Heart left ventricle (tissue), 16 donors: ENCODE measurements at regions of chr4 and their contacts with region 1.

Region 1: DNA sequence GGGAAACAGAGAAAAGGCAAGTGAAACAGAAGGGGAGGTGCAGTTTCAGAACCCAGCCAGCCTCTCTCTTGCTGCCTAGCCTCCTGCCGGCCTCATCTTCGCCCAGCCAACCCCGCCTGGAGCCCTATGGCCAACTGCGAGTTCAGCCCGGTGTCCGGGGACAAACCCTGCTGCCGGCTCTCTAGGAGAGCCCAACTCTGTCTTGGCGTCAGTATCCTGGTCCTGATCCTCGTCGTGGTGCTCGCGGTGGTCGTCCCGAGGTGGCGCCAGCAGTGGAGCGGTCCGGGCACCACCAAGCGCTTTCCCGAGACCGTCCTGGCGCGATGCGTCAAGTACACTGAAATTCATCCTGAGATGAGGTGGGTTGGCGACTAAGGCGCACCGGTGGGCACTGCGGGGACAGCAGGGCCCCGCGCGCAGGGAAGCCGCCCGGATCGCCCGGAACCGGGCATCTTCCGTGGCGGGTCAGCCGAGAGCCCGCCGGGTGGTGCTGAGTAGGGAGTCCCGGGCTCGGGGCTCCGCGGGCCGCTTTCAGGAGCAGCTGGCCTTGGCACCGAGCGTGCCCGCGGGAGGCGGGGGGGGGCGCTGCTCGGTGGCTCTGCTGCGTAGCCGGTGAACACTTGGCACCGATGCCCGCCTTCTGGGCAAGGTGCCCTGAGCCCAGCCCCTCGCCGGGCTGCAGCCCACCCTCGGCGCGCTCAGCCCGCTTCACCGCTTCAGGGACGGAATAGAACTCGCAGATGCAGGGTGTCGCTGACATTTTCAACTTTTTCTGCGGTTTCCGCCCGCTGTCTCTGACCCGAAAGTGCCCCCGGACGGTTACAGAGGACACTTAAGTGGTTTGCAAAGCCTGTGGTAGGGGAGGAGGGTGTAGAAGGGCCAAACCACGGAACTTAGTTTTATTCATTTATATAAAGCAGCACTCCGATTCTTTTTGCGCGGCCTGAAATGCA is at the start of gene CD38:
- DNase-seq: peak; percentile 25 to 79 (median 46)
- ATAC-seq: peak in 3 of 4 donors; percentile 66 to 80 (median 78)
- H3K4me3 ChIP-seq: peak within 1 kb of the TSS; percentile 54 to 90 (median 62)
- H3K27ac ChIP-seq: peak within 1 kb of the TSS; percentile 17 to 79 (median 62)
- H3K4me1 ChIP-seq: peaks cover 0 to 40% (median 7%) of the 10 kb centered on the region in 12 donors
- H3K27me3 ChIP-seq: no peaks in the 10 kb centered on the region
- CTCF ChIP-seq: no peak
- POLR2A ChIP-seq: no peak
- total RNA-seq, gene CD38: 1.0 to 12.4 (median 3.0) TPM

Region 2: GRCh38 chr4:15714646-15715435 is 63.7 kb before region 1 on chr4:
- intact Hi-C with region 1: loop called in 1 of 10 experiments (anchors 5 kb)
- DNase-seq: peak in 4 of 5 donors; percentile 32 to 52 (median 34)
- ATAC-seq: peak in 3 of 4 donors; percentile 36 to 71 (median 42)
- H3K4me3 ChIP-seq: no peak overlapping the region
- H3K27ac ChIP-seq: peak overlapping the region in 1 of 12 donors; percentile 12
- H3K4me1 ChIP-seq: peaks cover 0 to 8% (median 0%) of the 10 kb centered on the region in 12 donors
- H3K27me3 ChIP-seq: no peaks in the 10 kb centered on the region
- CTCF ChIP-seq: no peak
- POLR2A ChIP-seq: no peak

Region 3: DNA sequence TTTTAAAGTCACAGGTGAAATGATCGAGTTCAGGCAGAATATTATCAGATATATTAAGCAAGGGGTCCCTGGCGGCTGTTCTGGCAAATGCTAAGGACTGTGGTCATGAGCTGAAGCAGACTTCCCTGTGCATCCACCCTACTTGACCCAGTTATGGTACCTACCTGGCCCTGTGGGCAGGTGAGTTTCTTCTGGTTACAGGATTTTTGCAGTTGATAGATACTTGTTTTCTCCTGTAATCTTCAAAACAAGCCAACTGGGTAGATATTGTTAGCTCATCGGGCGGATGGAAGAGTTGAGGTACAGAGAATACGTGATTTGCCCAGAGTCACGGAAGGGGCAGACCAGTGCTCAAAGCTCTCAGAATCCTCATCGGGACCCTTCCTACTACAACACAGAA is 323.8 kb after region 1 on chr4:
- intact Hi-C with region 1: no loop called
- DNase-seq: no peak
- ATAC-seq: no peak
- H3K4me3 ChIP-seq: no peak overlapping the region
- H3K27ac ChIP-seq: no peak overlapping the region
- H3K4me1 ChIP-seq: peaks cover 0 to 15% (median 0%) of the 10 kb centered on the region in 12 donors
- H3K27me3 ChIP-seq: peaks cover 0 to 4% (median 0%) of the 10 kb centered on the region in 9 donors
- CTCF ChIP-seq: no peak
- POLR2A ChIP-seq: no peak